ACHN (cell line): ENCODE measurements at regions of chr20 and their contacts with region 1.

Region 1: GRCh38 chr20:63290677-63291472 is 2.1 kb upstream of the COL20A1 start:
- DNase-seq: peak; percentile 21

Region 2: GRCh38 chr20:63082301-63082805 is 208.5 kb before region 1 on chr20:
- in situ Hi-C with region 1: no loop called
- DNase-seq: peak; percentile 35

Region 3: DNA sequence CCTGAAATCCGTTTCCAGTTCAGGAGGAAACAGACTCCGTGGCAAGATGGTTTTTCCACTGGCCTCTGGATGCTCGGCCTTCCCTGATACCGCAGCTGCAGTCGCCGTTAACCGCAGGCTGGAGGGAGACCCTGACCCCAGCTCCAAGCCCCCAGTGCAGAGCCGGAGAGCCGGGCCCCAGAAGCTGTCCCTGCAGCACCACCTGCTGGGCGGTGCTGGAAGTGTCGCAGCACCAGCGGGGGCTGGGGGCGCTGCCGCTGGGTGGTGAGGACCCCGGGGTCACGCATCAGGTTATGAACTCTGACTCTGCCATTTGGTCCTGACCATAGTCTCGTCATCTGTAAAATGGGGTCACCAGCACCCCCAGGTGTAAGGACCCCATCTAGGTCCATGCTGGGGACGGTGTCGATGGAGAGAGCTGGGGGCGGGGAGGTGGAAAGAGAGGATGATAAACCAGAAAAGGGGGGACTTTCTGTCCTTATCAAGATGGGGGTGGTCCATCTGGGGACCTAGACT is 91.0 kb after region 1 on chr20:
- in situ Hi-C with region 1: loop called (anchors 25 kb)
- DNase-seq: no peak

Region 4: GRCh38 chr20:63495741-63496595 is 205.1 kb after region 1 on chr20:
- in situ Hi-C with region 1: no loop called
- DNase-seq: peak; percentile 34